SK-N-SH (cell line): ENCODE measurements at regions of chr9 and their contacts with region 1.

Region 1: GRCh38 chr9:121313458-121314152 is 45.6 kb downstream of the GSN start:
- DNase-seq: no peak
- H3K4me3 ChIP-seq: no peak overlapping the region
- H3K27ac ChIP-seq: no peak overlapping the region
- H3K4me1 ChIP-seq: no peaks in the 10 kb centered on the region
- H3K27me3 ChIP-seq: no peaks in the 10 kb centered on the region
- CTCF ChIP-seq: no peak
- EP300 ChIP-seq: no peak
- RAD21 ChIP-seq: no peak

Region 2: DNA sequence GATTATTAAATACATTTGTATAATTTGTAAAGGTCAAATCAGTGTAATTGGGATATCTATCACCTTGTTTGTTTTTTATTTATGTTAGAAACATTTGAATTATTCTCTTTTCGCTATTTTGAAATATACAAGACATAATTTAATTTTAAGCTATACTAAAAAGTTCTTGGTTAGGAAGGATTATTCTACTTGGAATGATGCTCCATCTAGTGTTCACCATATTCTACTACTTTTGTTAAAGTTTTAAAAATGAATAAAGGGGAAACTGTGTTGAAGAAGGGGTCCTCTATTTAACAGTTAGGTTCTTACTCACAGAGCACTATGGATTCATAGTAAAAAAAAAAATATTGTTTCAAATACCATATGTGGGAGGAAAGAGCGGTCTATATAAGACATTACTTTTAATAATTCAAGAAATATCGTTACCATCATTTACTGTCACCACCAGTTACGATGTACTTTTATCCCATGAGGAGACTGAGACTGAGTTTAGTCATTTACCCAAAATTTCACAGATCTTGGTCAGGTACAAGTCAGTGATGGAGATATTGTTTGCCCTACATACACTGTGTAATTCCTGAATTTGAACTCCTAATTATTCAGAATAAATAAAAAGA is 62.7 kb after region 1 on chr9:
- CTCF ChIA-PET with region 1: interaction called, 97 read pairs
- POLR2A ChIA-PET with region 1: no interaction called
- DNase-seq: peak; percentile 29
- H3K4me3 ChIP-seq: no peak overlapping the region; a peak in 1 of 4 replicates
- H3K27ac ChIP-seq: no peak overlapping the region
- H3K4me1 ChIP-seq: peaks cover 14 to 20% of the 10 kb centered on the region in 2 experiments; a peak in 3 of 4 replicates
- H3K27me3 ChIP-seq: no peaks in the 10 kb centered on the region
- CTCF ChIP-seq: peak; percentile 71
- EP300 ChIP-seq: no peak
- RAD21 ChIP-seq: peak; percentile 58